Activated T-helper 2 cell treated with anti-CD3 and anti-CD28 coated beads, Interferon-gamma antibody, Interleukin-2, Interleukin-4, amounts not matched to agents 10 μg/mL and 5 μg/mL and 100 μg/mL, durations not matched to agents 14 hours and 24 hours and 36 hours (primary cell): ENCODE measurements at regions of chr11 and their contacts with region 1.

Region 1: DNA sequence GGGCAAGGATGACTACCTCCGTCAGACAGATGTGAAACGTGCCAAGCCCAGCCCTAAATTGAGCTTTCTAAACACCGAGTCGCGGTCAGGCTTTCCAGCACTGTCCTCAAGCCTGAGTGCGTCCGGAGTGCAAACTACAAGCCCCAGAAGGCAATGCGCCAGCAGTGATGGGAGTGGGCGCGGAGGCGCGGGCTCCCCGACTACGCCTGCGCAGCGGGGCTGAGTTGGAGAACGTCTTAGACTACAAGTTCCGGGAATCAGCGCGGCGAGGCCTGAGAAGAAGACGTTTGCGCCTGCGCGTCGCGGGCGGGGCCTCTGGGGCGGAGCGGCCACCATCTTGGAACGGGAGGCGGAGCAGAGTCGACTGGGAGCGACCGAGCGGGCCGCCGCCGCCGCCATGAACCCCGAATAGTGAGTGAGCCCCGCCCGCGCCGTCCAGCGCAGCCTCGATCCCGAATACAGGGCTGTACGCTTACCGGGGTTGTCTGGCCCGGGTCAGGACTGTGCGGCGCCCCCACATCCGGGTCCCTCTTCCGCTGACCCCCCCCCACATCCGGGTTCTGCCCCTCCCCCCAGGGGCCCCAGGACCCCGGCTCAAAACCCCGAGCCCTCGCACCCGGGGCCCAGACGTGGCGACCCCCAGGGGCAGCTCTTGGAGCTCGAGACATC is at the start of gene RAB1B:
- DNase-seq: peak; percentile 100
- H3K4me3 Mint-ChIP-seq: peak within 1 kb of the TSS; percentile 91
- H3K27ac Mint-ChIP-seq: peak within 1 kb of the TSS; percentile 84
- H3K4me1 Mint-ChIP-seq: peaks cover 24% of the 10 kb centered on the region
- H3K27me3 Mint-ChIP-seq: no peaks in the 10 kb centered on the region
- total RNA-seq, gene RAB1B: 134 and 139 TPM in 2 replicates

Region 2: GRCh38 chr11:65530157-65530496 is 738.3 kb before region 1 on chr11:
- intact Hi-C with region 1: no loop called
- DNase-seq: no peak
- H3K4me3 Mint-ChIP-seq: no peak overlapping the region
- H3K27ac Mint-ChIP-seq: no peak overlapping the region
- H3K4me1 Mint-ChIP-seq: peaks cover 12% of the 10 kb centered on the region
- H3K27me3 Mint-ChIP-seq: no peaks in the 10 kb centered on the region

Region 3: DNA sequence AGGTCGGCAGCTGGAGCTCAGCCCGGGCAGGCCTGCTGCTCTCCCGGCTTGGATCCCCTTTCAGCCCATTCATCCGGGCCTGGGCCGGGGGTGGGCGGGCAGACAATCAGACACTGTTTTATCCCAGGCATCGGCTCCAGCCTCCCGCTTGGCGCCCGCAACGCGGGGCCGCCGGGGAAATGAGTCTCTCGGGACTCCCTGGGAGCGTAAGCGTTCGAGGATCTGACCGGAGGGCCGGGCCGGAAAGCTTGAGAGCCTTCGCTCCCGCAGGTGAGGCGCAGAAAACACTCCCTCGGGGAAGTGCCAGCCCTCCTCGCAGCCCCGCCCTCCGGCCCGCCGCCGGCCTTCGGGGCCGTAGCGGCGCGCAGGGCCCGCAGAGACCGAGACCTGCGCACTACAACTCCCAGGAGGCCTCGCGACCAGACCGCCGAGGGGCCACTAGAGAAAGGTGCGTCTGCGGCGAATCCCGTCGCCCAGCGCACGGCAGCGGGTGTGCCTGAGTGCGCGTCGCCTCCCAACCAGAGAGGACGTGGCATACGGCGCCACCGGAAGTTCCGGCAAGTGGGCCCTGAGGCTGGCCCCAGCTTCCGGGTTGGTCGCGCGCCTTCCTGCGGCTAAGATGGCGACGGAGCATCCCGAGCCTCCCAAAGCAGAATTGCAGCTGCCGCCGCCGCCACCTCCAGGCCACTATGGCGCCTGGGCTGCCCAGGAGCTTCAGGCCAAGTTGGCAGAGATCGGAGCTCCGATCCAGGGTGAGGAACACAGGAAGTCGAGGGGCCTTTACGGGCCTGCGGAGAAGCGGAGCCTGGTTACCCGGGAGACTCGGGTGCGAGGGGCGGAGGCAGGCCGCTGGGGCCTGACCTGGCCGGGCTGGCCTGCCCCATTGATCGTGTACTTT is 216.4 kb before region 1 on chr11 and contains the start of gene SF3B2:
- intact Hi-C with region 1: loop called (anchors 5 kb)
- DNase-seq: peak; percentile 97
- H3K4me3 Mint-ChIP-seq: peak within 1 kb of the TSS; percentile 100
- H3K27ac Mint-ChIP-seq: peak within 1 kb of the TSS; percentile 97
- H3K4me1 Mint-ChIP-seq: peaks cover 28% of the 10 kb centered on the region
- H3K27me3 Mint-ChIP-seq: peaks cover 5% of the 10 kb centered on the region
- total RNA-seq, gene SF3B2: 252 and 268 TPM in 2 replicates

Region 4: DNA sequence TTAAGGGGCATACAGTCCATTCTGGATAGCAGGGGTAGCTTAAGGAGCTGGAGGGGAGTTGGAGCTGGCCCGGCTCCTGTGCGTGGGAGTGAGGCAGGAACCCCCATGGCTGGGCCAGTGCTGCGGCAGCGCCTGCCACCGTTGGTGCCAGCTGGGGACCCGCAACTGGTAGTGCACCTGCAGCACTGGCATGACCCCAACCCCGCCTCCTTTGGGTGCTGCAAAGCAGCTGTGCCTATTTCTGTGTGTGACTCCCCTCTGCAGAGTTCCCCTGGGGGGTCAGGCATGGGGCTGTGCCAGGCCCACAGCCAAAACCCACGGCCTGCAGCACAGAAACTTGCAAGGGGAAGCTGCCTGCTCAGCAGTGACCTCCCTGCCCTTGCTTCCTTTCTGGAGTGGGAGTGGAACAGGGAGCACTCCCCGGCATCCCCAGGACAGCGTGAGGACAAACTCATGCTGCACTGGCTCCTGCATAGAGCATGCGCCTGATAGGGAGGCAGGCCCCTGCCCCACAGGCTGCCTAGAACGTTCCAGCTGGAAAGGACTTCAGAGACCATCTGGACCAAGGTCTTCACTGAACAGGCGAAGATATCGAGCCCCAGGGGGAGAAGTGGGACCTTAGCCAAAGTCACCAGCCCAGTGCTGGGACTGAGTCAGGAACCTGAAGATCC is 26.2 kb before region 1 on chr11:
- intact Hi-C with region 1: no loop called
- DNase-seq: no peak
- H3K4me3 Mint-ChIP-seq: no peak overlapping the region
- H3K27ac Mint-ChIP-seq: no peak overlapping the region
- H3K4me1 Mint-ChIP-seq: no peaks in the 10 kb centered on the region
- H3K27me3 Mint-ChIP-seq: no peaks in the 10 kb centered on the region

Region 5: GRCh38 chr11:66288671-66289547 is 20.5 kb after region 1 on chr11 and contains the start of gene YIF1A:
- intact Hi-C with region 1: loop called (anchors 1 kb)
- DNase-seq: peak; percentile 99
- H3K4me3 Mint-ChIP-seq: peak within 1 kb of the TSS; percentile 94
- H3K27ac Mint-ChIP-seq: peak within 1 kb of the TSS; percentile 89
- H3K4me1 Mint-ChIP-seq: peaks cover 14% of the 10 kb centered on the region
- H3K27me3 Mint-ChIP-seq: peaks cover 28% of the 10 kb centered on the region
- total RNA-seq, gene YIF1A: 78.9 and 85.2 TPM in 2 replicates